WTC11 (cell line): ENCODE measurements at regions of chr19 and their contacts with region 1.

Region 1: DNA sequence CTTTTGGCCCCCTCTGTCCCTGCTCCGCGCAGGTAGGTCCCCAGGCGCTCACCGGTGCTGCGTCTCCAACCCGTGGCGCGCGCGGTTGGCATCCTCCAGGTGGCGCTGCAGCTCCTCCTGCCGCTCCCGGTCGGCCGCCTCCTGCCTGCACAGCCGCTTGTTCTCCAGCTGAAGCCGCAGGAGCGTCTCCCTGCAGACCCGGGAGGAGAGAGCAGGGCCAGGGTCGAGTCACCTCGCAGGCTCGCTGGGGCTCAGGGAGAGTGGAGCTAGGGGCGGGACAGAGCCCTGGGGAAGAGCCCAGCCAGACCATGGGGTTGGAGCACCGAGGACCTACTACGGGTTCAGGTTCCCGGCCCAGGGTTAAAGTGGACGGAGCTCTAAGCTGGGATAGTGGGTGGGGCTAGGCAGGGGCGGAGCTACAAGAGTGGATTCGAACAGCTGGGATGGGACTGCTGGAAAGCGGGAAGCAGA is 9.3 kb downstream of the HOOK2 start:
- DNase-seq: peak; percentile 89
- ATAC-seq: peak; percentile 73
- H3K4me3 Mint-ChIP-seq: peak overlapping the region; percentile 60
- H3K27ac Mint-ChIP-seq: peak overlapping the region; percentile 67; the same call in 1 of the 2 replicates
- H3K4me1 Mint-ChIP-seq: peaks cover 13% of the 10 kb centered on the region
- H3K27me3 Mint-ChIP-seq: no peaks in the 10 kb centered on the region; the same call in 1 of the 2 replicates
- CTCF ChIP-seq: peak; percentile 61

Region 2: GRCh38 chr19:12527034-12527836 is 238.9 kb before region 1 on chr19:
- CTCF ChIA-PET with region 1: no interaction called
- POLR2A ChIA-PET with region 1: no interaction called
- DNase-seq: no peak
- ATAC-seq: no peak
- H3K4me3 Mint-ChIP-seq: no peak overlapping the region
- H3K27ac Mint-ChIP-seq: no peak overlapping the region
- H3K4me1 Mint-ChIP-seq: no peaks in the 10 kb centered on the region
- H3K27me3 Mint-ChIP-seq: peaks cover 16% of the 10 kb centered on the region
- CTCF ChIP-seq: no peak

Region 3: GRCh38 chr19:12656899-12657571 is 109.1 kb before region 1 on chr19:
- CTCF ChIA-PET with region 1: interaction called, 11 read pairs
- POLR2A ChIA-PET with region 1: no interaction called
- DNase-seq: peak; percentile 98
- ATAC-seq: peak; percentile 98
- H3K4me3 Mint-ChIP-seq: peak overlapping the region; percentile 56
- H3K27ac Mint-ChIP-seq: peak overlapping the region; percentile 86
- H3K4me1 Mint-ChIP-seq: peaks cover 6% of the 10 kb centered on the region
- H3K27me3 Mint-ChIP-seq: no peaks in the 10 kb centered on the region
- CTCF ChIP-seq: peak; percentile 18; the same call in 1 of the 2 replicates

Region 4: GRCh38 chr19:12722566-12723380 is 43.3 kb before region 1 on chr19:
- CTCF ChIA-PET with region 1: interaction called, 29 read pairs
- POLR2A ChIA-PET with region 1: interaction called, 4 read pairs
- DNase-seq: peak; percentile 96
- ATAC-seq: peak; percentile 69
- H3K4me3 Mint-ChIP-seq: peak overlapping the region; percentile 93
- H3K27ac Mint-ChIP-seq: peak overlapping the region; percentile 99
- H3K4me1 Mint-ChIP-seq: peaks cover 23% of the 10 kb centered on the region
- H3K27me3 Mint-ChIP-seq: no peaks in the 10 kb centered on the region
- CTCF ChIP-seq: no peak

Region 5: DNA sequence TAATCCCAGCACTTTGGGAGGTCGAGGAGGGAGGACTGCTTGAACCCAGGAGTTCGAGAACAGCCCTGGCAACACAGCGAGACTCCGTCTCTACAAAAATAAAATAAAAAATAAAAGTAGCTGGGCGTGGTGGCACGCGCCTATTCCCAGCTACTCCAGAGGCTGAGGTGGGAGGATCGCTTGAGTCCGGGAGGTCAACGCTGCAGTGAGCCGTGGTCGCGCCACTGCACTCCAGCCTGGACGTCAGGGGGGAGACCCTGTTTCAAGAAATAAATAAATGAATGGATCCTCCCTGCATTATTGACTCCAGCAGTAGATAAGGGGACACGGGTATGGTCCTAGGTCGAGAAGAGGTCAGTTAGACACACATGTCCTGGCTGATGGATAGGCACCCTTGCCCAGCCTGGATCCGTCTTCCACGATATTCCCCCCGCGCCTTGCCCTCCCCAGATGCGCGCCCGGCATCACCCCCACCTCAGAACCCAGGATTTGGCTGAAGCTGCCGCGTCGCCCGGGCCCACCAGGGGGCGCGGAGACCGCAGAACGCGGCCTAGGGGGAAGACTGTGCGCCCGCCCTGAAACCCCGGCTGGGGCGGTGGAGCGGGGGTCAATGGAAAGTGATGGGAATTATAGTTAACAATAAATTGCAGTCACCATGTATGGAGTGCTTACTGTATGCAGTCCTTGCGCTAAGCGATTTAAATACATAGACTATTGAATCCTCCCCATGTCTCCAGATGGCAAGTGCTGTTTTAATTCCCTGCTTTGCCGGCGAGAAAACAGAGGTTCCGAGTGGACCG is 11.3 kb after region 1 on chr19:
- CTCF ChIA-PET with region 1: interaction called, 97 read pairs
- POLR2A ChIA-PET with region 1: interaction called, 7 read pairs
- DNase-seq: peak; percentile 91
- ATAC-seq: peak; percentile 39
- H3K4me3 Mint-ChIP-seq: peak overlapping the region; percentile 79
- H3K27ac Mint-ChIP-seq: peak overlapping the region; percentile 49
- H3K4me1 Mint-ChIP-seq: peaks cover 21% of the 10 kb centered on the region
- H3K27me3 Mint-ChIP-seq: no peaks in the 10 kb centered on the region; the same call in 1 of the 2 replicates
- CTCF ChIP-seq: peak; percentile 74

Region 6: DNA sequence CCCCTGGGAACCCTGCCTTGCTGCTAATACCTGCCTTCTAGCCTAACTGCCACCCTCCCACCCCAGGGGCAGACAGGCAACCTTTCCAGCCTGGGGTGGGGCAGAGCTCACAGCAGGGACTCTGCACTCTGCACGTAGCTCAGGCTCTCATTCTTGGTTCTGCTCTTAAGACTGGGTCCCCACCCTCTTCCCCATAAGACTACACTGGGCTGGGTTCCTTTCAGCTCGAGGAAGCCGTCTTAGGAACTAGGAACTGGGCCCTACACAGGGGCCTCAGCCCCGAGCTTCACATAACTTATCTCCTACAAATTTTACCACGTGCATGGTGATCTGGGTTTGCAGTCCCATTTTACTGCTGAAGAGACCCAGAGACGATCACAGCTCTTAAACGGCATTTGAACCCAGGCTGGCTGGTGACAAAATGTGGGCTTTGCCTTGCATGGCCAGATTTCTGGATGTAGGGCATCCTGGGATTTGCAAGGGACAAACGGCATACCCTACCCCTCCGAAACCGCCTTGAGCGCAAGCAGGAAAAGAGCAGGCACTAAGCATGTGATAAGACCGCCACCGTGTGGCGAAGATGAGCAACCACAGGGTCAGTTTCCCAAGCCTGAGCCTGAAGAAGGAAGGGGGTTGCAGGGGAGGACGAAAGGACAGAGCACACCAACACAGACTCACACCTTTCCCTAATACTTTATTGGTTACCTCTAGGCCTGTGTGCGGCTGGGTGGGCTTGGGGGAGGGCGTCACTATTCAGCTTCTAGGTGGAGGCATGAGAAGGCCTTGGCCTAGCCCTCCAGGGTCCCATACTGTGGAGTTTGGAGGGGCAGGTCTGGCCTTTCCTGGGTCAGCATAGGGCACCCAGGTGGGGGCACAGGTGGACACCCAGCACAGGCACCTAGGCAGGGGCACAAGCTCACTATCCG is 30.3 kb after region 1 on chr19:
- CTCF ChIA-PET with region 1: interaction called, 341 read pairs
- POLR2A ChIA-PET with region 1: interaction called, 10 read pairs
- DNase-seq: peak; percentile 86
- ATAC-seq: peak; percentile 67
- H3K4me3 Mint-ChIP-seq: peak overlapping the region; percentile 43; the same call in 1 of the 2 replicates
- H3K27ac Mint-ChIP-seq: peak overlapping the region; percentile 96
- H3K4me1 Mint-ChIP-seq: peaks cover 26% of the 10 kb centered on the region
- H3K27me3 Mint-ChIP-seq: peaks cover 25% of the 10 kb centered on the region
- CTCF ChIP-seq: peak; percentile 84

Region 7: GRCh38 chr19:12881172-12881808 is 115.2 kb after region 1 on chr19 and contains the start of gene DNASE2:
- CTCF ChIA-PET with region 1: interaction called, 14 read pairs
- POLR2A ChIA-PET with region 1: no interaction called
- DNase-seq: peak; percentile 97
- ATAC-seq: peak; percentile 66
- H3K4me3 Mint-ChIP-seq: peak within 1 kb of the TSS; percentile 90
- H3K27ac Mint-ChIP-seq: peak within 1 kb of the TSS; percentile 94
- H3K4me1 Mint-ChIP-seq: peaks cover 8% of the 10 kb centered on the region
- H3K27me3 Mint-ChIP-seq: peaks cover 30% of the 10 kb centered on the region
- CTCF ChIP-seq: no peak
- total RNA-seq, gene DNASE2: 31.7 to 35.7 TPM (median 33.4 TPM) in 3 replicates